ENCODE measurements at regions of chr3 and their contacts with region 1.

Region 1: GRCh38 chr3:122793568-122794416 is at the start of gene HSPBAP1:
- DNase-seq: peak; percentile 86
- H3K4me3 Mint-ChIP-seq: peak within 1 kb of the TSS; percentile 89
- H3K27ac Mint-ChIP-seq: peak within 1 kb of the TSS; percentile 79
- H3K4me1 Mint-ChIP-seq: peaks cover 39% of the 10 kb centered on the region
- H3K27me3 Mint-ChIP-seq: no peaks in the 10 kb centered on the region
- total RNA-seq, gene HSPBAP1: 8.1 and 8.9 TPM in 2 replicates

Region 2: DNA sequence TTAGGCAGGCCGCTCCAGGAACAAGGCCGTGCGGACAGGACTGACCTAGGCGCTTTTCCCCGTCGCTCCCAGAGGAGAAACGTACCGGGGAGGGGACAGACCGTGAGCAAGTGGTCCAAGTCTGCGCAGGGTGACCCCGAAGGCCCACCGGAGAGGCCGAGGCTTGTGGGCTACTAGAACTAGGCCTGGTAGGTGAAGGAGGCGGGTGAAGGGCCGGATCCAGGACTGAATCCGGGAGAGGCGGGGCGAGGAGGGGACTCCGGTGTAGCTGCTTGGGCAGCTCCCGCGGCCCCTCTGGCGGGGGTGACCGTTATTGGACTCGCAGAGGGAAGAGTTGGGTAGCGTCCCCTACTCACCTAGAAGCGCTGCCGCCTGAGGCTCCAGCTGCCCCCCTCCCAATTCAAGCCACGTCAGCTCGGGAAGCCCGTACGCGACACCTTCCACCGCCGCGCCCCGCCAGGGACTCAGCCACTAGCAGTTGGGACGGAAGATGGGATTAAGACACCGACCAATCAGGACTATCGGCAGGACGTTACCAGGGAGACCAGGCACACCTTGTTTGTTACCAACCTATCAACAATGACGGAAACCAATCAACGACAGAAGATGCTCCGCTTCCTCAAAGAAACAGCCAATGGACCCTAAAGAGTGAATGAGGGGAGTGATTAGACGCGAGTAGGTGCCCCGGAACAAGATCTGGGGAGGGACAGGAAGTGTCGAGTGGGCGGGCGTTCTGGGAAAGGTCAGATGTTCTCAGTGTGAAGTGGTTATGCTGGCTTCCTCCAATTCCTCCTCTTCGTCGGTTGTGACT is 1044.3 kb before region 1 on chr3 and contains the start of gene GOLGB1:
- intact Hi-C with region 1: loop called (anchors 1 kb)
- DNase-seq: peak; percentile 89
- H3K4me3 Mint-ChIP-seq: no peak within 1 kb of the TSS
- H3K27ac Mint-ChIP-seq: no peak within 1 kb of the TSS
- H3K4me1 Mint-ChIP-seq: peaks cover 5% of the 10 kb centered on the region
- H3K27me3 Mint-ChIP-seq: peaks cover 12% of the 10 kb centered on the region
- total RNA-seq, gene GOLGB1: 23.2 and 23.6 TPM in 2 replicates

Region 3: GRCh38 chr3:122415720-122416654 is 377.8 kb before region 1 on chr3 and contains the start of gene WDR5B:
- intact Hi-C with region 1: loop called (anchors 10 kb)
- DNase-seq: peak; percentile 96
- H3K4me3 Mint-ChIP-seq: peak within 1 kb of the TSS; percentile 98
- H3K27ac Mint-ChIP-seq: peak within 1 kb of the TSS; percentile 99
- H3K4me1 Mint-ChIP-seq: peaks cover 48% of the 10 kb centered on the region
- H3K27me3 Mint-ChIP-seq: no peaks in the 10 kb centered on the region
- total RNA-seq, gene WDR5B: 4.3 and 5.6 TPM in 2 replicates

Region 4: DNA sequence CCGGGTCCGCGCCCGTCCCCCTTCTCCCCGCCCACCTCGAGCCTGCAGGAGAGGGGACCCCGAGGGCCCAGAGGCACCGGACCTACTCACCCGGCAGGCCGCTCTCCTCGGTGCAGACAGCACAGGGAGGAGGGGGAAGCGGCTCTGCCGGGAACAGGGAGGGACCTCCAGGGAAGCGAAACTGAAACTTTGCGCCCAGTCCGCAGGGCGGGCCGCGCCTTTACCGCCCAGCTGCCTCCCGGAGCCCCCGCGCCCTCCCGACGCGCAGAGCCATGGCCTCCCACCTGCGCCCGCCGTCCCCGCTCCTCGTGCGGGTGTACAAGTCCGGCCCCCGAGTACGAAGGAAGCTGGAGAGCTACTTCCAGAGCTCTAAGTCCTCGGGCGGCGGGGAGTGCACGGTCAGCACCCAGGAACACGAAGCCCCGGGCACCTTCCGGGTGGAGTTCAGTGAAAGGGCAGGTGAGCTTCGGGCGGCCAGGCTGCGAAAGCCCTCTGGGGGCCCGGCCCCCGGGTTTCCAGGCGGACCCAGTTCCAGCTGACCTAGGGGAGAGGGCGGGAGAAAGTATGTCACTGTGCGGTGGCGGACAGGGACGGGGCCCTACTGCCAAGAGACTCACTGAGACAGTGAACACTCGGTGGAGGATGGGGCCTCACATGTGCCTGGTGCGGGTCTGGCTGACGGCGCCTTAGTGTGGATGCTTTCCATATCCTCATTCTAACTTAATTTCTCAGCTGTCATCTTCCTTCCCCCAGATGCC is 229.5 kb before region 1 on chr3 and contains the starts of genes DTX3L and PARP9:
- intact Hi-C with region 1: loop called (anchors 5 kb)
- DNase-seq: peak; percentile 87
- H3K4me3 Mint-ChIP-seq: peak within 1 kb of the TSS; percentile 99
- H3K27ac Mint-ChIP-seq: peak within 1 kb of the TSS; percentile 98
- H3K4me1 Mint-ChIP-seq: peaks cover 79% of the 10 kb centered on the region
- H3K27me3 Mint-ChIP-seq: no peaks in the 10 kb centered on the region
- total RNA-seq, gene DTX3L: 40.8 and 44.5 TPM in 2 replicates
- total RNA-seq, gene PARP9: 45.0 and 47.3 TPM in 2 replicates

Region 5: DNA sequence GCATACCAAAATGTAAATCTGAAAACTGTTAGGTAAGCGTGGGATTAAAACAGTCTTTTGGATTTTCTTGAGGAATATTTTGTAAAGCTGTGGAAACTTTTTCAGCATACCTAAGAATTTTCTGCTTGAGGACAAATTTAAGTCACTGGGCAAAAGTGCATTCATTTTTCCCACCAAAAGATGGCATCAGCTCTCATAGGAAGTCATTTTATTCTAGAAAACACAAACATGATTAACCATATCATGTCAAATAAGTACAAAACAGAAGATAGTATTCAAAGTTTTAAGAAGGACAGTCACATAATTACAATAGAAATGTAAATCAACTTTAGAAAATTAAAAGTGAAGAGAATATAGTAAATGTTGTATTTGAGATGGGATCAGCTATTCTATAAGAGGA is 64.6 kb after region 1 on chr3:
- intact Hi-C with region 1: loop called (anchors 5 kb)
- DNase-seq: no peak
- H3K4me3 Mint-ChIP-seq: no peak overlapping the region
- H3K27ac Mint-ChIP-seq: no peak overlapping the region
- H3K4me1 Mint-ChIP-seq: peaks cover 9% of the 10 kb centered on the region
- H3K27me3 Mint-ChIP-seq: no peaks in the 10 kb centered on the region

Region 6: DNA sequence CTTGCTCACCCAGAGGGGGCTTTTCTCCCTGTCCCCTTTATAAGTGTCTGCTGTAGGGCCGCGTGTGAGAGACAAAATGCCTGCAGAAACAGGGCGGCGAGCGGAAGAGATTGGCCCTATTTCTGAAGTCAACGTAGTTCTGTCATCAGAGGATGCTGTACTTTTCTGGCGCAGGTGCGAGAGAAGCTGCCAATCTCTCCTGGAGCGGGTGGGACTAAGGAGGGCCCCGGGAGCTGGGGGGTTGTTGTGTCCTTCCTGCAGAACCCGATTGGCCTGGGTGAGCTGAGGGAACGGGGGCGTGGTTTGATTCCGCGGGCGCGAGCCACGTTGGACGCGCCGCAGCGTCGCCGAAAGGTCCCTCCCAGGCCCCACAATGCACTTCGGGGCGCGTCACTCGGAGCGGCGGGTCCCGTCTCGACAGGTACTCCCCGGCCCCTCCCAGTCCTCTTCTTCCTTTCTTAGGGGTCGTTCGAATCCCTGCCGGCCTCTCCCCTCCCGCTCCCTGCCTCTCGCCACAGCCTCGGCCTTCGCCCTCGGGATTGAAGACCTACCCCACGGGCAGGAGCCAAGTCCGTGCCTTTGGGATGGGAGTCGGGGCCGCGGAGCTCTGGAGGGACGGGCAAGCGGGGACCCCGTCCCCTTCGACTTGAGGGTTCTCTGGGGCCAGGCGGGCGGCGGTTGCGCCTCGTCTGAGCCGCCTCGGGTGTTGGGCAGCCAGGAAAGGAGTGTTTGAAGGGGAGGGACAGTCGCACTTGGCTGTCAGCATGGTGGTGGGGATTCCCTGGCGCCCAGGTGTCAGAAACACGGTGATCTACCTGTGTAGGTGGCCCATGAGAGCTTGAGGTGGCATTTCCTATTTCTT is 408.0 kb after region 1 on chr3 and contains the start of gene SEC22A:
- intact Hi-C with region 1: loop called (anchors 1 kb)
- DNase-seq: peak; percentile 95
- H3K4me3 Mint-ChIP-seq: peak within 1 kb of the TSS; percentile 87
- H3K27ac Mint-ChIP-seq: peak within 1 kb of the TSS; percentile 96
- H3K4me1 Mint-ChIP-seq: peaks cover 29% of the 10 kb centered on the region
- H3K27me3 Mint-ChIP-seq: peaks cover under 1% of the 10 kb centered on the region
- total RNA-seq, gene SEC22A: 15.8 and 18.5 TPM in 2 replicates

Measured in activated T-helper 1 cell treated with anti-CD3 and anti-CD28 coated beads, Interleukin-12 subunit alpha, Interleukin-12 subunit beta, Interleukin-2, Interleukin-4 antibody, amounts not matched to agents 30 ng/mL and 10 ng/mL and 1 ng/mL, durations not matched to agents 14 hours and 24 hours and 36 hours (primary cell).